IMR-90 (cell line): ENCODE measurements at regions of chr12 and their contacts with region 1.

Region 1: DNA sequence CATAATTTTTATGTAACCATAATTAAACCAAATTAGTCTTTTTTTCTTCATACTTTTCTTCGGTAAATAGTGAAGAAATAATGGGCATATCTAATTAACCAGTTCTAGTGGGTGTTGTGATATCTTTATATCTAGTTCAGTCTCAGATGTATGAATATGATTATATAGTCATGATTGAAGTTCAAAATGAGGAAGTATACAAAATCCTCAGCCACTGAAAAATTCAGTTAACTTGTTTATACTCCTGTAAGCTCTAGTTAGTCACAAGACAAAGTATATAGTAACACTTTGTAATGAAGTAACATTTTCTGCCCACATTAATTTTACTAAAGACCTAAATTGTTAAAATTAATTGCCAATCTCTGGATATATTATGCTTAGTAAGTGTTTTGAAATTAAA is 46.5 kb downstream of the CAND1 start:
- DNase-seq: no peak
- ATAC-seq: no peak
- H3K4me3 ChIP-seq: no peak overlapping the region
- H3K27ac ChIP-seq: no peak overlapping the region
- H3K4me1 ChIP-seq: no peaks in the 10 kb centered on the region
- H3K27me3 ChIP-seq: no peaks in the 10 kb centered on the region
- CTCF ChIP-seq: no peak
- POLR2A ChIP-seq: no peak
- RAD21 ChIP-seq: no peak

Region 2: DNA sequence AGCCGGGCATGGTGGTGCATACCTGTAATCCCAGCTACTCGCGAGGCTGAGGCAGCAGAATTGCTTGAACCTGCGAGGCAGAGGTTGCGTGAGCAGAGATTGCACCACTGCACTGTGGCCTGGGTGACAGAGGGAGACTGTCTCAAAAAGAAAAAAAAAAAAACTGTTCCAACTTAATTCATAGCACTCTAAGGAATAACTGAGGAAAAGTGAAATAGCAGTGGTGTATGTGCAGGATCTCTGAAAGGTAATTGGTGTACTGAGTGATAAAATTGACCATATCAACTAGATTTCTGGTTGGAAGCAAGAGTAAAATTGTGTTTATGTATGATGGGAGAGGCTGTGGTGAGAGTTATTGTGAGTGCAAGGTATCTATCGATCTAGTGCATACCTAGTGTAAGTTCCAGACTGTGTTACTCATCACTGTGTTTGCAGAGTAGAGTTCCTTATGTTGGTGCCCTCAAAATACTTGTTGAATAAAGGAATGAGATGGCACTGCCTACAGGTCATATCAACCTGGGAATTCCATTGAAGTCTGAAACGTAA is 40.2 kb before region 1 on chr12:
- CTCF ChIA-PET with region 1: no interaction called
- POLR2A ChIA-PET with region 1: no interaction called
- dilution Hi-C with region 1: no loop called
- in situ Hi-C with region 1: no loop called
- intact Hi-C with region 1: loop called (anchors 5 kb)
- DNase-seq: no peak
- ATAC-seq: peak; percentile 8; the same call in 1 of the 2 replicates
- H3K4me3 ChIP-seq: no peak overlapping the region
- H3K27ac ChIP-seq: peak overlapping the region; percentile 31; the same call in 1 of the 2 replicates
- H3K4me1 ChIP-seq: peaks cover 15% of the 10 kb centered on the region
- H3K27me3 ChIP-seq: no peaks in the 10 kb centered on the region
- CTCF ChIP-seq: no peak
- POLR2A ChIP-seq: no peak
- RAD21 ChIP-seq: no peak

Region 3: GRCh38 chr12:67424784-67425183 is 109.1 kb after region 1 on chr12:
- CTCF ChIA-PET with region 1: no interaction called
- POLR2A ChIA-PET with region 1: no interaction called
- dilution Hi-C with region 1: no loop called
- in situ Hi-C with region 1: no loop called
- intact Hi-C with region 1: no loop called
- DNase-seq: no peak
- ATAC-seq: no peak
- H3K4me3 ChIP-seq: no peak overlapping the region
- H3K27ac ChIP-seq: no peak overlapping the region
- H3K4me1 ChIP-seq: peaks cover 6% of the 10 kb centered on the region
- H3K27me3 ChIP-seq: no peaks in the 10 kb centered on the region
- CTCF ChIP-seq: no peak
- POLR2A ChIP-seq: no peak
- RAD21 ChIP-seq: no peak